Activated T-helper 1 cell treated with anti-CD3 and anti-CD28 coated beads, Interleukin-12 subunit alpha, Interleukin-12 subunit beta, Interleukin-2, Interleukin-4 antibody, amounts not matched to agents 30 ng/mL and 10 ng/mL and 1 ng/mL, durations not matched to agents 14 hours and 24 hours and 36 hours (primary cell): ENCODE measurements at regions of chr12 and their contacts with region 1.

Region 1: DNA sequence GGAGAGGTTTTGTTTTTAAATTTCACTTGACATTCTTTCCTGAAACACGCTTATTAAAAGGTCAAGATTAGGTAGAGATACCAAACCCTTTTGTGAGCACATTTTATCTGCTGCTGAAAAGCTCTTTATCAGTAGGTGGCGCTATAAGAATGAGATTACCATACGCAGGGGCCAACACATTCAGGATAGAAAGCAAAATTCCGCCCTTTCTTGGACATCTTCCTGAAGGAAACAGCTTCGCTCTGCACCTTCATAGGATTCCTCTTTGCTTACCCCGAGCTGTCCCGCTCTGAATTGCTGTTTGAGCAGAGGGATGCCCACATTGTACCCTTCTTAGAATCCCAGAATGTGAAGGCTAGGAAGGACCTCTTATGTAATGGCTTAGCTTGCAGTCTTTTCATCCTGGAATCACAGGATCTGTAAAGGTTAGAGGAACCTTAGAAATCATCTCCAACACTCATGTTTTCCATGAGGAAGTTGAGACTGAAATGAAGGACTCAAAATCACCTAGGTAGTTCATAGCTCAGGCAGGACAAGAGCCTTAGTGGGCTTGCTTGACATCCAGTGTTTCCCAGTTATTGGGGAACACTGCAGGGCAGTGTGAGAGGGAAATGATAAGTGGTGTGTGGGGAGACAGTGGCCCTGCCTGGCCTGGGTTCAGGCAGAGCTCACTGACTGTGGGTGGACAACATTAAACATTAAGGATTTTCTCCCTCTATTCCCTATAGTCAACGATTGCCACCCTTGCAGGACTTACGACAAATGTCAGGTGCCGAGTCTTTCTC is 38.7 kb upstream of the CRY1 start:
- DNase-seq: peak; percentile 6
- H3K4me3 Mint-ChIP-seq: no peak overlapping the region
- H3K27ac Mint-ChIP-seq: no peak overlapping the region
- H3K4me1 Mint-ChIP-seq: no peaks in the 10 kb centered on the region
- H3K27me3 Mint-ChIP-seq: no peaks in the 10 kb centered on the region

Region 2: GRCh38 chr12:107179871-107180270 is 47.8 kb after region 1 on chr12:
- intact Hi-C with region 1: no loop called
- DNase-seq: no peak
- H3K4me3 Mint-ChIP-seq: no peak overlapping the region
- H3K27ac Mint-ChIP-seq: no peak overlapping the region
- H3K4me1 Mint-ChIP-seq: peaks cover 7% of the 10 kb centered on the region
- H3K27me3 Mint-ChIP-seq: peaks cover 5% of the 10 kb centered on the region

Region 3: GRCh38 chr12:107607464-107608392 is 475.7 kb after region 1 on chr12:
- intact Hi-C with region 1: loop called (anchors 1 kb)
- DNase-seq: peak; percentile 55
- H3K4me3 Mint-ChIP-seq: no peak overlapping the region
- H3K27ac Mint-ChIP-seq: no peak overlapping the region
- H3K4me1 Mint-ChIP-seq: no peaks in the 10 kb centered on the region
- H3K27me3 Mint-ChIP-seq: no peaks in the 10 kb centered on the region